H1 (cell line): ENCODE measurements at regions of chr6 and their contacts with region 1.

Region 1: DNA sequence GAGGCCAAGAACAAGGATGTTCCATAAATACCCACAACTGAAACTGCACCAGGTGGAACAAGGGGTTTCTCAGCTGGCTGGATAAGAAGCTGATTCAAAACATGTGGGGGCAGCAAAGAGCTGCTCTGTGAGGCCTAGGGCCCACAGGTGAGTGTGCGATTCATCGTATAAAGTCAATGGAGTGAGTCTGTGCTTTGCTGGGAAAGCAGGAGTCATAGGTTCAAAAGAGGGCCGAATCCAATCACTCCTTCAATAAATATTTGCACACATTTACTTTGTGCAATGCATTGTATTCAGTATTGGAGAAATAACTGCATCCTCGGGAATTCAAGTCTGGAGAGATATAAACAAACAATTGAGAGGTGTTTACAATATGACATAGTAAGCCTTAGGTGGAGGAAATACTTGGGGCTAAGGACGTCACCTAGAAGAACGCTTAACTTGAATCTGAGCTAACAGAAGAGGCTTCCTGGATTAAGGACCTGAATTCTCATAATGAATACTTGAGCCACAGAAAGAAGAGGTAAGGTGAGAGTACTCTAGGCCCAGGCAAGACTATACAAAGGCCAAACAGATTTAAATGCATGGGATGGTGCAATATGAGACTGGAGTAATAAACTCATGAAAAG is 83.7 kb upstream of the TMEM30A start:
- DNase-seq: peak in 1 of 2 experiments; percentile 56
- H3K4me3 ChIP-seq: no peak overlapping the region
- H3K27ac ChIP-seq: no peak overlapping the region
- H3K4me1 ChIP-seq: peaks cover 0 to 3% (median 2%) of the 10 kb centered on the region in 4 experiments; a peak in 3 of 7 replicates
- H3K27me3 ChIP-seq: no peaks in the 10 kb centered on the region
- CTCF ChIP-seq: peak; percentile 68 to 88 (median 86)
- EP300 ChIP-seq: no peak
- POLR2A ChIP-seq: no peak
- RAD21 ChIP-seq: peak; percentile 96 to 97

Region 2: GRCh38 chr6:75306064-75306463 is 62.2 kb before region 1 on chr6:
- CTCF ChIA-PET with region 1: interaction called, 10 read pairs
- POLR2A ChIA-PET with region 1: interaction called, 3 read pairs
- DNase-seq: no peak
- H3K4me3 ChIP-seq: no peak overlapping the region
- H3K27ac ChIP-seq: no peak overlapping the region
- H3K4me1 ChIP-seq: peaks cover 2 to 7% (median 5%) of the 10 kb centered on the region in 4 experiments; a peak in 4 of 7 replicates
- H3K27me3 ChIP-seq: no peaks in the 10 kb centered on the region
- CTCF ChIP-seq: no peak
- EP300 ChIP-seq: no peak
- POLR2A ChIP-seq: no peak
- RAD21 ChIP-seq: no peak

Region 3: DNA sequence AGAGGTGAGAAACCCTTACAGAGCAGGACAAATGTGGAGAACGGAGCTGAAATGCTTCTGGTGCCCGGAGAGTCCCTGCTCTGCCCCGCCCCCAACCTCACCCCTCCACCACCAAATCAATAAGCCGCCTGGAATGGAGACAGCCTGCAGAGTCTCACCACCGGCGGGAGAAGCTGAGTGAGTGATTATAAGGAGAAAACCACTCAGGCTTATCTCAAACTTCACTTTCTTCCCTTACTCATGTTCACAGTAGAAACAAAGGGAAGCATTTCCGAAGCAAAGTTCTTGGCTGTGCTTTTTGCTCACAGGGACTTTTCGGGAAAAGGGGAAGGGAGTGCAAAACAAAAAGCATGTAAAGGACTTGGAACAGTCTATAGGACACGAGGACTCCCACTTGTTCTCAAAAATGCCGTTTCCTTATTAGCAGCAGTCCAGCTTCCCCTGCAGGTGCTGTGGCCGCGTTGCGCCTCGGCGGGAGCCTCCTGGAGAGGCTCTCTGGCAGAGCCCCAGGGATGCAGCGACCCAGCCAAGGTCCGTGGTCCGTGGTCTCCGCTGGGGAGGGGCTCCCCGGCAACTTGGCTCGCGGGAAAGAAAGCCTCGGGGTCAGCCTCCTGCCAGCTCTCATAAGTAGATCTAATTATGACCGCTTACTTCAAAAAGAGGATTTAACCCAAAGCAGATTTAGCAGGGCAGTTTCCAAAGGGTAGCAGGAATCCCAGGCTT is 18.8 kb before region 1 on chr6:
- CTCF ChIA-PET with region 1: interaction called, 55 read pairs
- POLR2A ChIA-PET with region 1: interaction called, 3 read pairs
- DNase-seq: peak in 1 of 2 experiments; percentile 77
- H3K4me3 ChIP-seq: peak overlapping the region; percentile 57 to 67 (median 65)
- H3K27ac ChIP-seq: peak overlapping the region; percentile 61
- H3K4me1 ChIP-seq: peaks cover 0 to 6% (median 4%) of the 10 kb centered on the region in 4 experiments; a peak in 4 of 7 replicates
- H3K27me3 ChIP-seq: no peaks in the 10 kb centered on the region
- CTCF ChIP-seq: no peak; a peak in 1 of 4 replicates
- EP300 ChIP-seq: no peak; a peak in 1 of 3 replicates
- POLR2A ChIP-seq: peak; percentile 42 to 77
- RAD21 ChIP-seq: peak; percentile 18 to 42; a peak in 3 of 4 replicates

Region 4: GRCh38 chr6:75381877-75382633 is 13.8 kb after region 1 on chr6:
- CTCF ChIA-PET with region 1: interaction called, 22 read pairs
- POLR2A ChIA-PET with region 1: no interaction called
- DNase-seq: no peak
- H3K4me3 ChIP-seq: no peak overlapping the region
- H3K27ac ChIP-seq: no peak overlapping the region
- H3K4me1 ChIP-seq: peaks cover 0 to 10% (median 3%) of the 10 kb centered on the region in 4 experiments; a peak in 4 of 7 replicates
- H3K27me3 ChIP-seq: no peaks in the 10 kb centered on the region
- CTCF ChIP-seq: no peak
- EP300 ChIP-seq: no peak
- POLR2A ChIP-seq: no peak
- RAD21 ChIP-seq: no peak

Region 5: DNA sequence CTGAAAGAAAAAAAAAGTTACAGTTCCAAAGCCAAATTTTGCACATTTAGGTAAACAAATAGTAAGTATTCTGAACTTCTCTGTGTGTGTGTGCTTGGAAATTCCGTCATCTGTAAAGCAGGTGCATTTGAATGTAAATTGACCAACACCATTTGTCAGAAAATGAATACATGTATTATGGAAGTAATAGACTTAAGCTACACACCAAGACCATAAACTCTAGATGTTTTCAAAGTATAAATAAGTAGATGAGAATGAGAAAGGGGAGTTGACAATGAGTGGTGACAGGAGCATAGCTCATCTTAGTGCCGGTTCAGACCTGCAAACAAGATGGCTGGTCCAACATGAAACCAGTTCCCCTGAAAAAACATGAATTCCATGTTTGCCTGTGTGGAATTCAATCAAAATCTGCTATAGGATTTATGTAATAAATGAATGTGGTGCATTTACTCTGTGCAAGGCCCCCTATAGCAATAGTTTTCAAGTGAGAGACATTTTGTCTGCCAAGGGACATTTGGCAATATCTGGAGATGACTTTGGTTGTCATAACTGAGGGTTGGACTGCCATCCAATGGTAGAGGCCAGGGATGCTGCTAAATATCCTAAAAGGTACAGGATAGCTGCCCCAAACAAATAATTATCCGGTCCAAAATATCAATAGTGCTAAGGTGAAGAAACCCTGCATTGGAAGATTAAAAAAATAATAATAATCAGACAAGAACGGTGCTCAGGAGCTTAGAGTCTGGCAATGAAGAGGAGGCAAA is 136.4 kb after region 1 on chr6:
- CTCF ChIA-PET with region 1: interaction called, 24 read pairs
- POLR2A ChIA-PET with region 1: no interaction called
- DNase-seq: no peak
- H3K4me3 ChIP-seq: no peak overlapping the region
- H3K27ac ChIP-seq: no peak overlapping the region
- H3K4me1 ChIP-seq: no peaks in the 10 kb centered on the region; a peak in 1 of 7 replicates
- H3K27me3 ChIP-seq: no peaks in the 10 kb centered on the region
- CTCF ChIP-seq: peak in 2 of 3 experiments; percentile 3 to 19; a peak in 2 of 4 replicates
- EP300 ChIP-seq: no peak
- POLR2A ChIP-seq: no peak
- RAD21 ChIP-seq: peak; percentile 44 to 54

Region 6: DNA sequence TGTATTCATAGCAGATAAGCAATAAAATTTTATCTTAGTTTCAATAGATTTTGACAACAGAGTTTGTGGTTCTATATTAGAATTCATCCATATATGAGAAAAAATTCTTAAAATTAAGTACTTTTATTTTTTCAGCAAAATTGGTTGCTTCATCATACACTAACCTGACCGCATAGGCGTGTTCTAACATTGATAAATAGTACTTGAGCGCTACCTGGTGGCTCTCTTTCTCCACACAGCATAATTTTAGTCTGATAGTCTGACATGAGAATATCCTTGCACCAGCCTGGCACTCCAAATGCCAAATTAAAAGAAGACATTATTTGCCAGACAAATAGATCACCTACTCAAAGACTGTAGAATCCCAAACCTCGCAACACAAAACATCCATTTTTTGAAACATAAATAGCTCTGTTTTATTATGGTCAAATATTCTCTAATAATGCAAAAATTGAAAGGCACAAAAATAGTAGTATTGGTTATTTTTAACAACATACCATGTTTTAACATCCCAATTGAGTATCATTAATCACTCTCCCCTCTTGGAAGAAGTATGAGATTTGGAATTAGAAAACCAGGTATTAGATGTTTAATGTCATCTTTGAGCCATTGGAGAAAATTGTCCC is 158.3 kb after region 1 on chr6:
- CTCF ChIA-PET with region 1: interaction called, 87 read pairs
- POLR2A ChIA-PET with region 1: no interaction called
- DNase-seq: peak in 1 of 2 experiments; percentile 61
- H3K4me3 ChIP-seq: no peak overlapping the region
- H3K27ac ChIP-seq: no peak overlapping the region
- H3K4me1 ChIP-seq: no peaks in the 10 kb centered on the region
- H3K27me3 ChIP-seq: no peaks in the 10 kb centered on the region
- CTCF ChIP-seq: peak in 2 of 3 experiments; percentile 64 to 77; a peak in 3 of 4 replicates
- EP300 ChIP-seq: no peak
- POLR2A ChIP-seq: no peak
- RAD21 ChIP-seq: peak; percentile 96 to 97

Region 7: GRCh38 chr6:75563032-75563431 is 194.8 kb after region 1 on chr6:
- CTCF ChIA-PET with region 1: interaction called, 13 read pairs
- POLR2A ChIA-PET with region 1: no interaction called
- DNase-seq: peak; percentile 10 to 48
- H3K4me3 ChIP-seq: no peak overlapping the region
- H3K27ac ChIP-seq: no peak overlapping the region
- H3K4me1 ChIP-seq: no peaks in the 10 kb centered on the region
- H3K27me3 ChIP-seq: no peaks in the 10 kb centered on the region
- CTCF ChIP-seq: peak; percentile 39 to 78 (median 60)
- EP300 ChIP-seq: no peak
- POLR2A ChIP-seq: no peak
- RAD21 ChIP-seq: peak; percentile 55 to 69